H1 (cell line): ENCODE measurements at regions of chr3 and their contacts with region 1.

Region 1: DNA sequence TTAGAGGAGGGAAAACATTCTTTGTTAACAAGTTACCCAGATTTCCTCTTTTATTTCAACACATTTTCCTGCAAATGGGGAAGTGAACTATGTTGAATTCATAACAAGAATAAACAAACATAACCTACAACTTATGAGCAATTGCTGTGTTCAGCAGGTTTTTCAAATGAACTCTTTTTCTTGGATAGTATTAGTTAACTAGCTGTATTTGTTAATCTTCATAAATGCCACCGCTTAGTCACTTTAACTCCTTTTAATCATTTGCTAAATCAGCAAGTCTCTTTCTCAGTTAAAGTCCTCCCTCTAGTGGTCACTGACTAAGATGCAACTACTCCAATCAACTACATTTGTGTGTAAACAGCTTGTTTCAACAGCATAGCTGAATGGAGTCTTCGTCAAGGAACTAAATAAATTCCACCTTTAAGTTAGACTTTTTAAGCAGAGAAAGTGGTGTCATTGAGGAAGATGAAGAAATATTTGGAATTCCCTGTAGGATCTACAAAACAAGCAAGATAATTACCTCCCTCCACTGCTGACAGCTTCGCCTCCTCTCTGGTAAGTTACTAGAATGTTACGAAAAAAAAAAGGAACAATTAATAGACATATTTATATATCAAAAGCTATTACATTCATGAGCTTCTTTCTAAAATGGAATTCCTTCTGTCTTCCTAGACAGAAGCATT is 1122.0 kb downstream of the ROBO1 start:
- DNase-seq: peak in 1 of 2 experiments; percentile 23
- H3K4me3 ChIP-seq: no peak overlapping the region
- H3K27ac ChIP-seq: no peak overlapping the region
- H3K4me1 ChIP-seq: peaks cover 0 to 10% (median 6%) of the 10 kb centered on the region in 4 experiments; a peak in 4 of 7 replicates
- H3K27me3 ChIP-seq: no peaks in the 10 kb centered on the region
- CTCF ChIP-seq: peak in 2 of 3 experiments; percentile 54 to 83; a peak in 2 of 4 replicates
- EP300 ChIP-seq: no peak
- POLR2A ChIP-seq: no peak
- RAD21 ChIP-seq: peak; percentile 94 to 95

Region 2: GRCh38 chr3:78221300-78221699 is 424.5 kb before region 1 on chr3:
- CTCF ChIA-PET with region 1: interaction called, 10 read pairs
- POLR2A ChIA-PET with region 1: no interaction called
- DNase-seq: no peak
- H3K4me3 ChIP-seq: no peak overlapping the region
- H3K27ac ChIP-seq: no peak overlapping the region
- H3K4me1 ChIP-seq: no peaks in the 10 kb centered on the region
- H3K27me3 ChIP-seq: no peaks in the 10 kb centered on the region
- CTCF ChIP-seq: peak in 1 of 3 experiments; percentile 27; a peak in 1 of 4 replicates
- EP300 ChIP-seq: no peak
- POLR2A ChIP-seq: no peak
- RAD21 ChIP-seq: peak; percentile 59 to 64

Region 3: DNA sequence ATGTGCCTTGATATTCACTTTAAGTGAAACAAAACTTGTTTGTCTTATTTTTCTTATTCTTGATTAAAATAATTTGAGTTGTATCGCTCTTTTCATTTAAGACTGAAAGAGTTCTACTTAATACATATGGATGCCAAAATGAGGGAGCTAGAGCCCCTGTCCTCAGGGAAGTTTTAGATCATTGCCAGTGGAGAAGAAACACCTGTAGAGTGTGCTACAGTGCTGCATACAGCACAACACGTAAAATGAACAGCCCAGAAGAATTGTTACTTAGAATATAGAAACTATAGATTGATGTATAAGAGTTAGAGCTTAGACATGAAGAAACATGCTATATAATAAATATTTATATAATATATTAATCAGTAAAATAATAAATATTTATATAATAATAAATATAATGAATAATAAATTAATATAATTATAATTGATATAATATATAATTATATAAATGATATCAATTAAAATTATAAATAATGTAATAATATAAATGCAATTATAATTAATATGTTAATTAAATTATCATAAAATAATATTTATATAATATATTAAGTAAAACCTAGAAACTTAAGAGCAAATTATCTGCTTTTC is 371.2 kb before region 1 on chr3:
- CTCF ChIA-PET with region 1: interaction called, 30 read pairs
- POLR2A ChIA-PET with region 1: no interaction called
- DNase-seq: no peak
- H3K4me3 ChIP-seq: no peak overlapping the region
- H3K27ac ChIP-seq: no peak overlapping the region
- H3K4me1 ChIP-seq: peaks cover 0 to 5% (median 3%) of the 10 kb centered on the region in 4 experiments; a peak in 4 of 7 replicates
- H3K27me3 ChIP-seq: no peaks in the 10 kb centered on the region
- CTCF ChIP-seq: peak in 2 of 3 experiments; percentile 20 to 35; a peak in 3 of 4 replicates
- EP300 ChIP-seq: no peak
- POLR2A ChIP-seq: no peak
- RAD21 ChIP-seq: peak; percentile 76 to 81

Region 4: GRCh38 chr3:78529601-78530000 is 116.2 kb before region 1 on chr3:
- CTCF ChIA-PET with region 1: no interaction called
- POLR2A ChIA-PET with region 1: no interaction called
- DNase-seq: no peak
- H3K4me3 ChIP-seq: no peak overlapping the region
- H3K27ac ChIP-seq: no peak overlapping the region
- H3K4me1 ChIP-seq: no peaks in the 10 kb centered on the region
- H3K27me3 ChIP-seq: no peaks in the 10 kb centered on the region
- CTCF ChIP-seq: no peak
- EP300 ChIP-seq: no peak
- POLR2A ChIP-seq: no peak
- RAD21 ChIP-seq: no peak

Region 5: DNA sequence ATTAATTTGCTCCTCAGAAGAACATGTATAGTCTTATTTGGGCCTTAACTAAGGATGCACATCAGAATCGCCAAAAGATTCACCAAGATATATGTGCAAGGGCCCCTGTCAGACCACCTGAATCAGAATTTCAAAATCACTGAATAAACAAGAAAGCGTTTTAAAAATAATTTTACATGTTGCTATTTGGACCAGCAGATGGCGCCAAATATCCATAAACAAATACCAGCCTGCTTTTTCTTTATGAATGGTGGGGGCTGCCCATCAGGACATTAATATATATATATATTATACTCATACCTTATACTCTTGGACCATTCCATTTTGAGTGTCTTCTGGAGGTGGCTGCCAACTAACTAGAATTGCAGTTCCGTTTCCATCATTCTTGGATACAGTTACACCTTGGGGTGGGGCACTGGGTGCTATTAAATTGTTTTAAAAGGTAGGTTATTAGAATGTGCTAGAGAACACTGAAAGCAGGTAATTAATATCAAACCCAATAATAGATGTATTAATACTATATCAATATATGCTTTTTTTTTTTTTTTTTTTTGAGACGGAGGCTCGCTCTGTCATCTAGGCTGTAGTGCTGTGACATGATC is 13.7 kb after region 1 on chr3:
- CTCF ChIA-PET with region 1: interaction called, 20 read pairs
- POLR2A ChIA-PET with region 1: no interaction called
- DNase-seq: no peak
- H3K4me3 ChIP-seq: no peak overlapping the region
- H3K27ac ChIP-seq: no peak overlapping the region
- H3K4me1 ChIP-seq: no peaks in the 10 kb centered on the region
- H3K27me3 ChIP-seq: no peaks in the 10 kb centered on the region
- CTCF ChIP-seq: peak in 2 of 3 experiments; percentile 32 to 53; a peak in 2 of 4 replicates
- EP300 ChIP-seq: no peak
- POLR2A ChIP-seq: no peak
- RAD21 ChIP-seq: peak; percentile 71 to 76